ENCODE measurements at regions of chr12 and their contacts with region 1.

Region 1: DNA sequence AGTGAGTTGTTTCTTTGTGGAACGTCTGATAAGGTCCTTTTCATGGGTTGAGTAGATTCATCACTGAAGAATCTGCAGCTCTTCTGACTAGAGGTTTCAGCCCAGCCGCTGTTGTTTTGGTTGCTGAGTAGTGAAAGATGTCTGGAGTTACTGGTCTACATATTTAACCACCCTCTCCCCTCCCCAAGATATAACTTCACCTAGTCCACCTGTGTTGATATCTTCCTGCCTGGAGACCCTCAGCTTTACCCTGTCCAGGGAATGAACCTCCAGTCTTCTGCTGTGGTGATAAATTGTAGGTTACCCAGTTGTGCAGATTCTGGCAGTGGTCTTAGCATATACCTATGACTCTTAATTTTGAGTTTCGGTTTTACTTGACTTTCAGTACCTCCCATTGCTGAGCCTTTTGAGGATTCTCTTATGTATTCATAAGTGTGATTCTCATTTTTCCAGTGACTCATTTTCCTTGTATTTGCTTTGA is 62.9 kb downstream of the CCDC91 start:
- DNase-seq: peak; percentile 60
- H3K4me3 Mint-ChIP-seq: peak overlapping the region; percentile 30
- H3K27ac Mint-ChIP-seq: peak overlapping the region; percentile 79
- H3K4me1 Mint-ChIP-seq: peaks cover 63% of the 10 kb centered on the region
- H3K27me3 Mint-ChIP-seq: no peaks in the 10 kb centered on the region

Region 2: DNA sequence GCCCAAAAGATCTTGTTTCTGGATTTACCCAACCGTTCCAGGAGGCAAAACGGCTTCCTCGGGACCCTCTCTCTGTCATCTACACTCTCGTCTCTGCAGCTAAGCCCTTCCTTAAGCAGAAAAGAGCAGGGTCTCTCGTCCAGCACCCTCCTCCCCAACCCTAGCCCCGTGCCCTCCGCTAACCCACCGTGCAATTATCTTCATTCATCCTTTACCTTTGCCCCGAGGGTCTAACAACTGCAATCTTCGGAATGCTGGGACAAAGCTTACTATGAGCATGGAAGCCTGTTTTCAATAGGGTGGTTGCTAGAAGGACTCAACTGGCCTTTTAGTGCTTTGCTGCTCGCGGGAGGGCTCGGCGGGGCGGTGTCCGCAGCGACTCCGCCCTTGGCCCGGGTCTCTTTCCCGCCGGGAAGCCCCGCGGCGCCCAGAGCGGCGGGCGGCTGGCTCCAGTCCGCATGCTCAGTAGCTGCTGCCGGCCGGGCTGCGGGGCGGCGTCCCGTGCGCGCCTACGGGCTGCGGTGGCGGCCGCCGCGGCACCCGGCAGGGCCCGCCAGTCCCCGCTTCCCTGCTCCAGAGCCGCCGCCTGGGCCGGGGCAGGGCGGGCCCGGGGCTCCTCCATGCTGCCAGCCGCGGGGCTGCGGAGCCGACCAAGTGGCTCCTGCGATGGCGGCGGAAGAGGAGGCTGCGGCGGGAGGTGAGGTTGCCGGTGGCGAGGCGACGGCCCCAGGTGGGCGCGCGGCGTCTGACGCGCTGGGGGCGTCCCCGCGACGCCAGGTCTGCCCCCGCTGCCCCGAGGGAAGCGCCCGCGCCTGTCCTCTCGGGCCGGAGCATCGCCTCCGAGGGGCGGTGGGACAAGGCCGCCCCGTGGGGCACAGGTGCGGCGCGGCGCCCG is 920.5 kb before region 1 on chr12 and contains the start of gene BMAL2:
- CTCF ChIA-PET with region 1: no interaction called
- intact Hi-C with region 1: loop called (anchors 5 kb)
- DNase-seq: peak; percentile 44
- H3K4me3 Mint-ChIP-seq: peak within 1 kb of the TSS; percentile 90
- H3K27ac Mint-ChIP-seq: peak within 1 kb of the TSS; percentile 74
- H3K4me1 Mint-ChIP-seq: peaks cover 34% of the 10 kb centered on the region
- H3K27me3 Mint-ChIP-seq: peaks cover 30% of the 10 kb centered on the region
- total RNA-seq, gene BMAL2: 7.9 to 9.2 TPM

Region 3: DNA sequence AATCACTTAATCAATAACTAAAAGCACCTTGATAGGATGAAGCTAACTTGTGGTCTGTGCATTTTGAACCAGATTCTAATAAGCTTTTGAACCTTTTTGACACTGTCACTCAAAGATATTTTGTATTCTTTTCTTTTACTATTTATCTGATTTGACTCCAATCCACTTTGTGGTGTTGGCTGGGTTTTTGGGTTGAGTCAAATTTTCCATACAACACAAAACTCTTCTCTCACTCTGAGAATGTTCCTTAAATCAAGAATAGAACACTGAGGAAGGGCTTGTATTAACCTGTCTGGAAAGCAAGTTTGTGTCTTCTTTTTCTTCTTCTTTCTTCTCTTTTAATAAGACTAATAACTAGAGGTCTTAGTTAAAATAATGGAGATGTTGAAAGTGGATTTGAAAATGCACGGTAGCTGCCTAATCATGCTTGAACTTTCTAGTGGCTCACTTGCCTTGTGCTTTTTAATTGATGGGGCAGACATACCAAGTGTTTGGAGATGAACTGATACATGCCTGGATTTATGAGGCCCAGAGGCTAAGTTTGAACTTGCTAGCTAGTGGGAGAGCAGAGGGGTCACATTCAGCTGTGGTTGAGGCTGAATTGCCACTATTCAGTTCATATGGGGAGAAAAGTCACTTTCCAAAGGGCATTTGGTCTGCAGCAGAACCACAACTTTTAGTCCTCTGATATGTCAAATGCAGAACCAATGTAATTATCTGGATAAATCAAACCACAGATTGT is 187.1 kb before region 1 on chr12:
- CTCF ChIA-PET with region 1: no interaction called
- intact Hi-C with region 1: loop called (anchors 1 kb)
- DNase-seq: peak; percentile 17
- H3K4me3 Mint-ChIP-seq: no peak overlapping the region
- H3K27ac Mint-ChIP-seq: no peak overlapping the region
- H3K4me1 Mint-ChIP-seq: peaks cover 18% of the 10 kb centered on the region
- H3K27me3 Mint-ChIP-seq: peaks cover 6% of the 10 kb centered on the region

Region 4: GRCh38 chr12:28217805-28218204 is 35.4 kb before region 1 on chr12:
- CTCF ChIA-PET with region 1: interaction called, 6 read pairs
- intact Hi-C with region 1: loop called (anchors 1 kb)
- DNase-seq: no peak
- H3K4me3 Mint-ChIP-seq: no peak overlapping the region
- H3K27ac Mint-ChIP-seq: peak overlapping the region; percentile 22
- H3K4me1 Mint-ChIP-seq: peaks cover 56% of the 10 kb centered on the region
- H3K27me3 Mint-ChIP-seq: no peaks in the 10 kb centered on the region

Region 5: GRCh38 chr12:28497889-28498411 is 244.7 kb after region 1 on chr12:
- CTCF ChIA-PET with region 1: no interaction called
- intact Hi-C with region 1: loop called (anchors 1 kb)
- DNase-seq: peak; percentile 10
- H3K4me3 Mint-ChIP-seq: no peak overlapping the region
- H3K27ac Mint-ChIP-seq: peak overlapping the region; percentile 46
- H3K4me1 Mint-ChIP-seq: peaks cover 18% of the 10 kb centered on the region
- H3K27me3 Mint-ChIP-seq: no peaks in the 10 kb centered on the region

Region 6: DNA sequence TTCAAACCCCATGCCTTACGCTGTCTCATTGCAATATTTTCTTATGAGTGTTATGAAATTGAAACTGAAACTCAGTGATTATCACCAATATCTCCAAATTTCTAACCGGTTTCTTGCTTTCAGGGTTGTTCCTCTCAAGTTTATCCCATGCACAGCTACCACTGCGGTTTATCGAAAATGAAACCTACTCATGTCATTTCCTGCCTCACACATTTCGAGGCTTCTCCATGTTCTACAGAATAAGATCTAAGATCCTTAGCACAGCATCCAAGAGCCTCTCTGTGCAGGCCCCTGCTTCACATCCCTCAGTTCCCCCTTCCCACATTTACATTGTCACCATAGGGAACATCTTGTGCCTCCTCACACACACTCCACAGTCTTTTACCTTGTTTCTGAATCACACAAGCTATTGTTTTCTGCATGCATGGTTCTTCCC is 850.4 kb after region 1 on chr12:
- CTCF ChIA-PET with region 1: no interaction called
- intact Hi-C with region 1: loop called (anchors 1 kb)
- DNase-seq: peak; percentile 64
- H3K4me3 Mint-ChIP-seq: no peak overlapping the region
- H3K27ac Mint-ChIP-seq: no peak overlapping the region
- H3K4me1 Mint-ChIP-seq: peaks cover 31% of the 10 kb centered on the region
- H3K27me3 Mint-ChIP-seq: no peaks in the 10 kb centered on the region

Measured in activated naive CD4-positive, alpha-beta T cell treated with anti-CD3 and anti-CD28 coated beads for 36 hours (primary cell).